Left colon (tissue), 2 donors: ENCODE measurements at regions of chr12 and their contacts with region 1.

Region 1: GRCh38 chr12:119208622-119209061 is 29.9 kb downstream of the HSPB8 start:
- DNase-seq: peak; percentile 23 to 66
- ATAC-seq: peak; percentile 26

Region 2: GRCh38 chr12:119328111-119328510 is 119.5 kb after region 1 on chr12:
- intact Hi-C with region 1: loop called in 1 of 2 experiments (anchors 10 kb)
- DNase-seq: peak in 1 of 2 donors; percentile 27
- ATAC-seq: peak; percentile 67